ENCODE measurements at regions of chr4 and their contacts with region 1.

Region 1: GRCh38 chr4:189124149-189124758 is 816.4 kb upstream of the FRG1 start:
- DNase-seq: peak; percentile 46
- H3K4me3 ChIP-seq: no peak overlapping the region
- H3K27ac ChIP-seq: no peak overlapping the region
- H3K27me3 ChIP-seq: no peaks in the 10 kb centered on the region
- CTCF ChIP-seq: peak; percentile 86

Region 2: GRCh38 chr4:189202182-189202868 is 78.1 kb after region 1 on chr4:
- CTCF ChIA-PET with region 1: interaction called, 11 read pairs
- POLR2A ChIA-PET with region 1: no interaction called
- DNase-seq: peak; percentile 86
- H3K4me3 ChIP-seq: peak overlapping the region; percentile 43
- H3K27ac ChIP-seq: peak overlapping the region; percentile 54
- H3K27me3 ChIP-seq: no peaks in the 10 kb centered on the region
- CTCF ChIP-seq: peak; percentile 92

Measured in AG04450 (cell line).